ENCODE measurements at regions of chr1 and their contacts with region 1.

Region 1: GRCh38 chr1:108512239-108512981 is 47.5 kb upstream of the EEIG2 start:
- DNase-seq: no peak
- H3K4me3 ChIP-seq: no peak overlapping the region
- H3K27ac ChIP-seq: no peak overlapping the region
- H3K4me1 ChIP-seq: no peaks in the 10 kb centered on the region
- H3K27me3 ChIP-seq: no peaks in the 10 kb centered on the region
- CTCF ChIP-seq: peak; percentile 48 to 93 (median 85)
- POLR2A ChIP-seq: no peak

Region 2: GRCh38 chr1:108559215-108560186 is 47.1 kb after region 1 on chr1 and contains the start of gene EEIG2:
- intact Hi-C with region 1: loop called in 1 of 2 experiments (anchors 10 kb)
- DNase-seq: peak; percentile 77 to 88 (median 84)
- H3K4me3 ChIP-seq: peak within 1 kb of the TSS in 3 of 4 donors; percentile 1 to 55 (median 46)
- H3K27ac ChIP-seq: peak within 1 kb of the TSS in 3 of 5 donors; percentile 14 to 66 (median 57)
- H3K4me1 ChIP-seq: peaks cover 0 to 21% of the 10 kb centered on the region in 2 donors
- H3K27me3 ChIP-seq: no peaks in the 10 kb centered on the region
- CTCF ChIP-seq: peak; percentile 9 to 91 (median 56)
- POLR2A ChIP-seq: no peak
- total RNA-seq, gene EEIG2: 6.0 to 13.8 (median 8.5) TPM

Region 3: GRCh38 chr1:108646648-108647269 is 134.3 kb after region 1 on chr1:
- intact Hi-C with region 1: loop called (anchors 5 kb)
- DNase-seq: peak; percentile 51 to 84 (median 71)
- H3K4me3 ChIP-seq: no peak overlapping the region
- H3K27ac ChIP-seq: peak overlapping the region; percentile 57 to 92 (median 76)
- H3K4me1 ChIP-seq: peaks cover 0 to 11% of the 10 kb centered on the region in 2 donors
- H3K27me3 ChIP-seq: no peaks in the 10 kb centered on the region
- CTCF ChIP-seq: no peak
- POLR2A ChIP-seq: no peak

Measured in adrenal gland (tissue), 19 donors.